Breast epithelium (tissue), 4 donors: ENCODE measurements at regions of chr1 and their contacts with region 1.

Region 1: GRCh38 chr1:65525266-65526048 is 105.0 kb downstream of the LEPR start:
- DNase-seq: no peak
- H3K4me3 ChIP-seq: peak overlapping the region; percentile 63 to 79 (median 70)
- H3K27ac ChIP-seq: peak overlapping the region; percentile 71 to 93
- H3K4me1 ChIP-seq: no peaks in the 10 kb centered on the region
- H3K27me3 ChIP-seq: peaks cover 0 to 9% of the 10 kb centered on the region in 2 donors
- CTCF ChIP-seq: no peak
- POLR2A ChIP-seq: no peak

Region 2: GRCh38 chr1:65584399-65584798 is 58.9 kb after region 1 on chr1:
- intact Hi-C with region 1: loop called (anchors 2 kb)
- DNase-seq: no peak
- H3K4me3 ChIP-seq: no peak overlapping the region
- H3K27ac ChIP-seq: no peak overlapping the region
- H3K4me1 ChIP-seq: no peaks in the 10 kb centered on the region
- H3K27me3 ChIP-seq: no peaks in the 10 kb centered on the region
- CTCF ChIP-seq: no peak
- POLR2A ChIP-seq: no peak